ENCODE measurements at regions of chr11 and their contacts with region 1.

Region 1: DNA sequence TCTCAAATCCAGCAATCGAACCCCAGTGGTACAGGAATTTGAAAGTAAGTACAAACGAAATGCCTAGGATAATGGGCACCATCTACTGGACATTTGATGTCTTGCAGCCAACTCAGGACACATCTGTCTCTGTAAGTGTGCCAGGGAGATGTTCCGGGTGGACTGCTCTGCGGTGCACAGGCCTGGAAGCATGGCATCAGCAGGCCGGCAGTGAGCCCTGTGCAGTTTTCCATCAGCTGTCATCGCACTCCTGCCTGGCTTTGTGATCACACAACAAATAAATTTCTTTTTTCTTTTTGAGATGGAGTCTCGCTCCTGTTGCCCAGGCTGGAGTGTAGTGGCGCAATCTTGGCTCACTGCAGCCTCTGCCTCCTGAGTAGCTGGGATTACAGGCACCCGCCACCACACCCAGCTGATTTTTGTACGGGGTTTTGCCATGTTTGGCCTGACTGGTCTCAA is 71.0 kb downstream of the JAM3 start:
- DNase-seq: peak; percentile 70 to 73
- H3K4me3 ChIP-seq: no peak overlapping the region
- H3K4me3 Mint-ChIP-seq: no peak overlapping the region
- H3K27ac Mint-ChIP-seq: no peak overlapping the region
- H3K4me1 ChIP-seq: no peaks in the 10 kb centered on the region
- H3K4me1 Mint-ChIP-seq: no peaks in the 10 kb centered on the region
- H3K27me3 ChIP-seq: no peaks in the 10 kb centered on the region
- H3K27me3 Mint-ChIP-seq: peaks cover 33% of the 10 kb centered on the region
- CTCF ChIP-seq: peak; percentile 88 to 93

Region 2: GRCh38 chr11:134008634-134009071 is 131.2 kb before region 1 on chr11:
- CTCF ChIA-PET with region 1: no interaction called
- POLR2A ChIA-PET with region 1: no interaction called
- intact Hi-C with region 1: no loop called
- DNase-seq: no peak
- H3K4me3 ChIP-seq: no peak overlapping the region
- H3K4me3 Mint-ChIP-seq: no peak overlapping the region
- H3K27ac Mint-ChIP-seq: no peak overlapping the region
- H3K4me1 ChIP-seq: no peaks in the 10 kb centered on the region
- H3K4me1 Mint-ChIP-seq: no peaks in the 10 kb centered on the region
- H3K27me3 ChIP-seq: no peaks in the 10 kb centered on the region; the same call in 1 of the 2 replicates
- H3K27me3 Mint-ChIP-seq: peaks cover 25% of the 10 kb centered on the region
- CTCF ChIP-seq: no peak

Region 3: DNA sequence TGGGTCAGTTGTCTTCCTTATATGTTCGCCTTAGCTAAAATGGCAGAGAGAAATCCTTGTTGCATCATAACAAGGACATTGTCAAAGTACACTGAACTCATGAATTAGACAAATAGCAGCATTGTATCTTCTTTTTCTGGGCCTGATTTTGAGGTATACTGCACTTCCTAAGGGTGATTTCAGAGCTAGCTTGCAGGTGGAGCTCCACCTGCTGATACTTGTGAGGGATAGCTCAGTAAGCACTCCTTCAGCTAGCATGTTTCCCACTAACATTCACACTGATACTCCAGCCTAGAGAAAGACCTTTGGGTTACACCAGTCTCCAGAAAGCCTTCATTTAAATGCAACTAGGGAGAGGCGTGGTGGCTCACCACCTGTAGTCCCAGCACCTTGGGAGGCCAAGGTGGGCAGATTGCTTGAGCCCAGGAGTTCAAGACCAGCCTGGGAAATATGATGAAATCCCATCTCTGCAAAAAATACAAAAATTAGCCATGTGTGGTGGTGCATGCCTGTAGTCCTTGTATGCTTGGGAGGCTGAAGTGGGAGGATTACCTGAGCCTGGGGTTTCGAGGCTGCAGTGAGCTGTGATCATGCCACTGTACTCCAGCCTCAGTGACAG is 41.2 kb before region 1 on chr11:
- CTCF ChIA-PET with region 1: no interaction called
- POLR2A ChIA-PET with region 1: no interaction called
- intact Hi-C with region 1: loop called (anchors 2 kb)
- DNase-seq: peak in 1 of 2 experiments; percentile 37
- H3K4me3 ChIP-seq: no peak overlapping the region
- H3K4me3 Mint-ChIP-seq: no peak overlapping the region
- H3K27ac Mint-ChIP-seq: no peak overlapping the region
- H3K4me1 ChIP-seq: no peaks in the 10 kb centered on the region; the same call in 1 of the 2 replicates
- H3K4me1 Mint-ChIP-seq: no peaks in the 10 kb centered on the region
- H3K27me3 ChIP-seq: 0 out of 2 replicates have a peak, but pooled peaks cover 1% of the 10 kb centered on the region
- H3K27me3 Mint-ChIP-seq: peaks cover 5% of the 10 kb centered on the region
- CTCF ChIP-seq: peak; percentile 58 to 88

Region 4: DNA sequence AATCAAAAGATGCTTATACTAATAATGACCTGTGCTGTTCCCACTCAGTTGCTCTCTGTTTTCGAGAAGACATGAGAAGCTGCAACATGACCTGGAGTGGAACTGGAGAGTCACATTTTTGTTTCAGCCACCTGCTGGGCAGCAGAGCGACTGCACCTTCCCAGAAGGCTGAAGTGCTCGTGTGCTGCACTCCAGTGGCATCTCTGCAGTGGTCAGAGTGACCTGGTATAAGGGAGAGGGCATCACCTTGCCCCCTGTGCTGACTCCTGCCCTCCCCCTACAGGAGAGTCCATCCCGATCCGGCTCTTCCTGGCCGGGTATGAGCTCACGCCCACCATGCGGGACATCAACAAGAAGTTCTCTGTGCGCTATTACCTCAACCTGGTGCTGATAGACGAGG is 104.8 kb after region 1 on chr11:
- CTCF ChIA-PET with region 1: no interaction called
- POLR2A ChIA-PET with region 1: no interaction called
- intact Hi-C with region 1: no loop called
- DNase-seq: peak; percentile 48 to 52
- H3K4me3 ChIP-seq: no peak overlapping the region
- H3K4me3 Mint-ChIP-seq: no peak overlapping the region
- H3K27ac Mint-ChIP-seq: no peak overlapping the region
- H3K4me1 ChIP-seq: no peaks in the 10 kb centered on the region
- H3K4me1 Mint-ChIP-seq: no peaks in the 10 kb centered on the region
- H3K27me3 ChIP-seq: no peaks in the 10 kb centered on the region
- H3K27me3 Mint-ChIP-seq: no peaks in the 10 kb centered on the region
- CTCF ChIP-seq: peak; percentile 78 to 80

Measured in Caco-2 (cell line).